GM10248 (cell line): ENCODE measurements at regions of chr14 and their contacts with region 1.

Region 1: GRCh38 chr14:103819503-103820307 is 27.7 kb downstream of the PPP1R13B start:
- DNase-seq: peak; percentile 33
- CTCF ChIP-seq: no peak

Region 2: GRCh38 chr14:103782376-103782775 is 37.3 kb before region 1 on chr14:
- CTCF ChIA-PET with region 1: no interaction called
- POLR2A ChIA-PET with region 1: no interaction called
- DNase-seq: no peak
- CTCF ChIP-seq: no peak

Region 3: DNA sequence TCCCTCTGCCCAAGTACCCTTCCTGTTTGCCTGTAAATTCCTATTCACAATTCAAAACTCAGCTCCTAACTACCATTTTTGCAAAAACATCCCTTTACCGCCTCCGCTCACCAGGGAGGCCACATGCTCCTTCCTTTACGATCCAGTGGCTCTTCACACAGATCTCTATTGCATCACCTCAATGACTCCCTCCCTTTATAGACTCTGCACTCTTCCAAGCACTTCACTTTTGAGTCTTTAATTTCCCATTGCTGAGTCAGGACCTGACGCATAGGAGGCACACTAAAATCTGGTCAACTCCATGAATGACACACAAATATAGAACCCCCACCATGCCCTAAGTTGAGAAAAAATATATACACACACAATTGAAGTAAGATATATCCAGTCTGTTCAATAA is 18.2 kb before region 1 on chr14:
- CTCF ChIA-PET with region 1: interaction called, 29 read pairs
- POLR2A ChIA-PET with region 1: interaction called, 3 read pairs
- DNase-seq: no peak
- CTCF ChIP-seq: no peak

Region 4: GRCh38 chr14:103910262-103910935 is 90.7 kb after region 1 on chr14:
- CTCF ChIA-PET with region 1: interaction called, 11 read pairs
- POLR2A ChIA-PET with region 1: no interaction called
- DNase-seq: peak; percentile 82
- CTCF ChIP-seq: peak; percentile 82